Aorta (tissue), 5 donors: ENCODE measurements at regions of chr3 and their contacts with region 1.

Region 1: GRCh38 chr3:134373994-134374790 is at the start of gene AMOTL2:
- DNase-seq: peak; percentile 90 to 95
- ATAC-seq: peak; percentile 83
- H3K4me3 ChIP-seq: peak within 1 kb of the TSS; percentile 82 to 95
- H3K27ac ChIP-seq: peak within 1 kb of the TSS; percentile 91 to 99
- H3K4me1 ChIP-seq: no peaks in the 10 kb centered on the region
- H3K27me3 ChIP-seq: no peaks in the 10 kb centered on the region
- total RNA-seq, gene AMOTL2: 82.1 to 118 TPM

Region 2: DNA sequence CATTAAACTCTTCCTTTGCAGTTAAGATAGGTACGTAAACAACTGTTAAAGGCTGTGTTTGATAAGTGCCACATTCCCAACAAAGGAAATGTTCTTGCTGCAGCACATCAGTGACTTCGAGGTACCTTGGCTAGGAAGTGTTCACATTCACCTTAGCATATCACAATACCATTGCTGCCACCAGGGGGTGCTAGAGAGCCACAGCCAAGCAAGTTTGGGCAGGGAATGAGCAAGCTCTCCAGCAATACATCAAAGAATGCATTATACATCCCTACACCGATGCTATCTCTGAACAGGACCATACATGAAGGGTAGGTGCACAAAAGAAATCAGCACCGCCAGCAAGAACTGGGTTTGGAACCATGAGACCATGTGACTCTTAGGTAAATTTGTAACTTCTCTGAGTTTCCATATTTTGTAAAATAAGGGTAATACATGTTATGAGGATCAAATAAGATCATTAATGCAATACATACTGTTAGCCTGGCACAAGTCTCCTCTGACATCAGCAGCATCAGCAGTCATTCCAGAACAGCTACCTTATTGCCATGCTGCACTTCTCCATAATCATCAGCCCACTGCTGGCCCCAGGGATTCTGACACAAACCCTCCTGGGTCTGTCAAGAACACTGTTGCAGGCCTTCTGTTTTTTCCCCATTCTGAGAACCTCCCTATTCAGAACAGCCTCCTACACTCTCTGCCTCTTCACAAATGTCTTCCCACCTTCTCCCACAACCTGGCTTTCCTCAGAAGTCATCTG is 161.1 kb before region 1 on chr3:
- intact Hi-C with region 1: loop called in 1 of 2 experiments (anchors 10 kb)
- DNase-seq: peak; percentile 83 to 92
- ATAC-seq: peak; percentile 90
- H3K4me3 ChIP-seq: no peak overlapping the region
- H3K27ac ChIP-seq: no peak overlapping the region
- H3K4me1 ChIP-seq: no peaks in the 10 kb centered on the region
- H3K27me3 ChIP-seq: no peaks in the 10 kb centered on the region

Region 3: DNA sequence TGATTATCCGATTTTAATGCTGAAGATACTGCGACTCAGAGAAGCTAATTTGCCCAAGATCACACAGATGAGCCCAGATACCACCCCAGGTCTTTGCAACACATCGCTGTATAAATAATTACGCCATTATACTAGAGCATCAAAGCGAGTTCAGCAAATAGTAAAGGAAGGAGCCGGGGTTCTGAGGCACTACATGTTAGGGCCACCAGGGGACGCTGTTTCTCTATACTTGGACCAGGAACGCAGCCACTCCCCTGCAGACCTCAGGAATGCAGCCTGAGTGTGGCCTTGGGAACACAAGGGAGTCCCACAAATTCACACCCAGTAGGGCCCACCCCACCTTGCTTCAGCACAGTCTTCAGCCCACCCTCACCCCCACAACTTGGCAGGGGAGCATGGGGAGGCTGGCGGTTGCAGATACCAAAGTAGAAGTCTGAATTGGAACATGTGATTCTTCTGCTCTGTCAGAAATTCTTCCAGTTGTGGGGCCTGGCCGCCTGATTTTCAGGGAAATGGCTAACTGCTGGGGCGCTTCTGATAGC is 65.8 kb before region 1 on chr3:
- intact Hi-C with region 1: loop called in 1 of 2 experiments (anchors 1 kb)
- DNase-seq: peak; percentile 87 to 91
- ATAC-seq: peak; percentile 91
- H3K4me3 ChIP-seq: no peak overlapping the region
- H3K27ac ChIP-seq: peak overlapping the region; percentile 30 to 58
- H3K4me1 ChIP-seq: no peaks in the 10 kb centered on the region
- H3K27me3 ChIP-seq: no peaks in the 10 kb centered on the region

Region 4: DNA sequence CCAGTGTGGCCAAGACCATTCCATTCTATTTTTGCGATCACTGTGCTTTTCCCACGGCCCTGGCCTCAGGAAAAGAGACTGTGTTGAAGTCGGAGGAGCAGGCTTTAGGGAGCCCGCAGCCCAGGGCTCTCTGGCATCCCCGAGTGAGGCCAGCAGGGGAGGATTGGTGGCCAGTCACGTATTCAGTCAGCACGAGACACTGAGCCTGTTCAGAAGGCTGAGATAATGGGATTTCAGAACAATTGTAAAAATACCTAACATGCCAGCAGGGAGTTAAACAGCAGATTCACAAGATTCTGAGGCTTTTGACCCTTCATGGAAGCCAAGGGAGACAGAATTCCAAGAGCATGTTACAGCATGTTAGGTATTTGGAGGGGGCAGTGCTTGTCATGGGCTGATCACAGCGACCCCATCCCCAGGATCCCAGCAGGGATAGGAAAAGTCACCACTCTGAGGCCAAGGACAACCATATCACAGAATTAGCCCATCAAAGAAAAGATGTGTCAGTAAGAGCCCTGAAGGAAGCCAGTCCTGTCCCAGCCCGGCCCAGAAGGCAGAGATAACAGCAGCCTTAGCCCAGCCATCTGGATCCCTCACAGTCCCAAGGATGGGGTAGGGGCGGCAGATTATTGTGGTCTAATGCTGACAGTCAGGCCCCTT is 40.5 kb before region 1 on chr3:
- intact Hi-C with region 1: loop called (anchors 2 kb)
- DNase-seq: peak in 1 of 2 donors; percentile 73
- ATAC-seq: peak; percentile 49
- H3K4me3 ChIP-seq: no peak overlapping the region
- H3K27ac ChIP-seq: peak overlapping the region; percentile 40 to 75
- H3K4me1 ChIP-seq: peaks cover 5 to 8% of the 10 kb centered on the region in 2 donors
- H3K27me3 ChIP-seq: no peaks in the 10 kb centered on the region

Region 5: GRCh38 chr3:134406331-134407238 is 32.4 kb after region 1 on chr3:
- intact Hi-C with region 1: no loop called
- DNase-seq: peak in 1 of 2 donors; percentile 76
- ATAC-seq: peak; percentile 63
- H3K4me3 ChIP-seq: peak overlapping the region; percentile 19 to 32
- H3K27ac ChIP-seq: no peak overlapping the region
- H3K4me1 ChIP-seq: no peaks in the 10 kb centered on the region
- H3K27me3 ChIP-seq: no peaks in the 10 kb centered on the region

Region 6: DNA sequence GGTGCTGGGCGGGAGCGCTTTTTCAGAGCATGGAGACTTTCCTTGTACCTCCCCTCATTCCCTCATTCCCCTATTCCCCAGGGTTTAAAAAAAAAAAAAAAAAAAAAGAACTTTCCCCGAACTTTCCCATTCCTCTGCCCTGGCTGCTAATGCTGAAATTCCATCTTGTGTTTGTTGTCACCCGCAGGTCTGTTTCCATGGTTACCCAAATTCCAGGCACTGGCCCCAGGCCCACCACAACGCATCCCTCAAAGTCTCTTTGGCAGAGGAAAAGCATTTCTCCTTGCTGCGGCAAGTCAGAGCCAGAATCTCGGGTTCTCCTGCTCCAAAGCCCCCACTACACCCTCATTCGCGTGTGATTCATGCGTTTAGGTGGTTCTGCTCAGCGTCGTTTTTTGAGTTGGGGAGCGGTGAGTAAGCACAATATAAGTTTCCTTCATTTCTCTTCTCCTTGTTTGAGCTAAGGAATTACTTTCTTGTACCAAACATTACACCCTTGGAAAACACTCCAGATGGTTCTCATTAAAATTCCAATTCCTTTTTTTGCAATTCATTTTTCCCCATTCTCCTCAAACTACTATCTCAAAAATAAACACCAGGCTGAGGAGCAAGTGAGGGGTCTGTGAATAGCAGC is 90.0 kb after region 1 on chr3:
- intact Hi-C with region 1: loop called in 1 of 2 experiments (anchors 2 kb)
- DNase-seq: peak; percentile 88 to 91
- ATAC-seq: peak; percentile 87
- H3K4me3 ChIP-seq: no peak overlapping the region
- H3K27ac ChIP-seq: peak overlapping the region in 1 of 2 donors; percentile 89
- H3K4me1 ChIP-seq: peaks cover 2 to 9% of the 10 kb centered on the region in 2 donors
- H3K27me3 ChIP-seq: no peaks in the 10 kb centered on the region